Right ventricle myocardium inferior (tissue), 1 donor: ENCODE measurements at regions of chr6 and their contacts with region 1.

Region 1: GRCh38 chr6:109526905-109527628 is 44.0 kb upstream of the ZBTB24 start:
- DNase-seq: no peak
- ATAC-seq: peak; percentile 34

Region 2: DNA sequence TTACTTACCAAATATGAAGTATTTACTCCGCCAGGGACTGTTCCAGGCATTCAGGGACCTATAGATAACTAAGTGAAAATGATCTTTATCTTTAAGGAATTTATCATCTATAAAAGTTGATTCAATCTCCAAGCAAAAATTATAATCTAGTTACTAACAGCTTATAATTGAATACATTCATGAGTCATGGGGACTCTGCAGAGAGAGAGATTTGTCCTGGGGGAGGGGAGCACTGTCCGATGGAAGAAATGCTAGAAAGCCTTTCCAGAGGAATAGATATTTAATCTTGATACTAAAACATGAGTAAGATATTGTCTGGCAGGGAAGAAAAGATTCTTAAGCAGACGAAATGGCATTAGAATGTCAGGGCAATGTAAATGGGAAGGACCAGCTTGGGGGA is 284.1 kb before region 1 on chr6:
- intact Hi-C with region 1: no loop called
- DNase-seq: no peak
- ATAC-seq: no peak

Region 3: DNA sequence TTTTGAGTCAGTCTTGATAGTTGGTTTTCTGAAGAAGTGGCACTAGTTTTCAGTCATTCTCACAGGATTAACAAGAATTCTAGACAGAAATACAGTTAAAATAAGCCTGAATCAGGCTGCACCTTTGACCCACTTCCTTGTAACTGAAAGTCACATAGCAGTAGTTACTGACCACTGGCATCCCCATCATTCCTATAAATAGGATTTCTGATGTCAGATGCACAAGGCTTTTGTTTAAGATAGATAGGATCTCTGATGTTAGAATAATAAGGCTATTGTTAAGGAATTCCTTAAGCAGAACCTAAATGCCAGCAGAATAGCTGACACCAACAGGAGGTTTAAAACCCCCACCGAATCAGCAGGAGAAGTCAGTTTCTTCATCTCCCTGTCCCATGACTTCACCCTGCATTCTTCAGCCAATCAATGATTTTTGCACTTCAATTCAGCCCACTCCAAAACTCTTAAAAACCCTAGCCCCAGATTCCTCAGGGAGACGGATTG is 13.4 kb before region 1 on chr6:
- intact Hi-C with region 1: no loop called
- DNase-seq: no peak
- ATAC-seq: no peak

Region 4: GRCh38 chr6:109690737-109691621 is 163.9 kb after region 1 on chr6 and contains the starts of genes AK9 and FIG4:
- intact Hi-C with region 1: loop called (anchors 10 kb)
- DNase-seq: peak; percentile 97
- ATAC-seq: peak; percentile 99
- total RNA-seq, gene AK9: 11.9 TPM
- total RNA-seq, gene FIG4: 8.4 TPM

Region 5: GRCh38 chr6:110039364-110039980 is 512.4 kb after region 1 on chr6:
- intact Hi-C with region 1: loop called (anchors 5 kb)
- DNase-seq: peak; percentile 90
- ATAC-seq: peak; percentile 94

Region 6: GRCh38 chr6:110053395-110054240 is 526.6 kb after region 1 on chr6:
- intact Hi-C with region 1: loop called (anchors 5 kb)
- DNase-seq: no peak
- ATAC-seq: peak; percentile 31